ENCODE measurements at regions of chr3 and their contacts with region 1.

Region 1: DNA sequence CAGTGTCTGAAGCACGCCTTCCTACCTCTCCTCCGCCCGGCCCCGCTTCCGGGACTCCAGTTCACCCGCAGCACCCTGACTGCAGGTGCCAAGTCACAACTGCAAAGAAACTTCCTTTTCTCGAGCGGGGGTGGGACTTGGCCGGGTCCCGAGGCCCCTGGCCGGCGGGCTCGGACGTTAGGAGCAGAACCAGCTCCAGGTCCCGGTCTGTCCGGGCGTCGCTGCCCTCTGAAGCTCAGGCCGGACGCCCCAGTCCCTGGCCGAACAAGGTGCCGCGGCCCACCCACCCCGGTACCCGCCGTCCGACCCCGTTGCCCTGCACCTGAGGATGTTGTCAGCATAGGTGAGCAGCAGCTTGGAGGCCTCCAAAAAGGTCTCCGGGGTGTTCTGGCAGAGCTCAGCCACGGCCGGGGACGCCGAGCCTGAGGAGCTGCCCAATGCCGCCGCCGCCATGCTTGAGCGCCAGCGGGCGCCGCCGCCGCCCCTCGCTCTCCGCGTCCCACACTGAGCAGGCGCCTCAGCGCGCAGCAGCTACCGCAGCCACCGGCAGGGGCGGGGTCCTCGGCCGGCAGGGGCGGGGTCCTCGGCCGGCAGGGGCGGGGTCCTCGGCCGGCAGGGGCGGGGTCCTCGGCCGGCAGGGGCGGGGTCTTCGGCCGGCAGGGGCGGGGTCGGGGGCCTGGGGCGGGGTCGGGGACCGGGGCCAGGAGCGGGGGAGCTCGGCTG is at the start of gene NGLY1:
- DNase-seq: peak; percentile 75 to 91
- H3K4me3 ChIP-seq: peak within 1 kb of the TSS; percentile 95 to 97
- H3K27ac ChIP-seq: peak within 1 kb of the TSS; percentile 94 to 97
- H3K4me1 ChIP-seq: peaks cover 0 to 21% (median 11%) of the 10 kb centered on the region in 4 donors
- H3K27me3 ChIP-seq: no peaks in the 10 kb centered on the region
- CTCF ChIP-seq: peak; percentile 35 to 39

Region 2: DNA sequence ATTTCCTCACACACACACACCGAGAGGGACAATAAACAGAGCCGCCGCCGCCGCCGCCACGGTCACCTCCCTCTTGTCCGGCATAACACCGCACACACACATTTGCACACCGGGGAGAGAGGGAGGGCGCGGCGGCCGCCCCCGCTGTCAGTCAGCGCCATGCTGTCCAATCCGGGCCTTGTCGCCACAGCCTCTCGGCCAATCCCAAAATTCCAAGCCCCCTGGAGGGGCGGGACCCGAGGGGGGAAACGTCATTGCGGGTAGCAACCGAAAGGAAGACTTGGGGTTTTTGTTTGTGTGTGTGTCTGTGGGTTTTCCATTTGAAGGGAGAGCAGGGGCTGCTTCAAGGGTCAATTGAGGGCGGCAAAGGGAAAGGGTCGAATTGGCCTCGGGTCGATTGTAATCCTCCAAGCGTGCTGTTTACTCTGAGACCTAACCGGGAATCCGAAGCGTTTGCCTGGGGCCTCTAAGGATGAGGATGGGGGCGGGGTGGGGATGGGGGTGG is 118.2 kb before region 1 on chr3 and contains the start of gene TOP2B:
- intact Hi-C with region 1: loop called (anchors 5 kb)
- DNase-seq: peak; percentile 96 to 98
- H3K4me3 ChIP-seq: peak within 1 kb of the TSS; percentile 81 to 90
- H3K27ac ChIP-seq: peak within 1 kb of the TSS; percentile 87 to 98
- H3K4me1 ChIP-seq: peaks cover 0 to 34% (median 22%) of the 10 kb centered on the region in 4 donors
- H3K27me3 ChIP-seq: no peaks in the 10 kb centered on the region
- CTCF ChIP-seq: no peak

Region 3: GRCh38 chr3:26004172-26004571 is 221.1 kb after region 1 on chr3:
- intact Hi-C with region 1: no loop called
- DNase-seq: no peak
- H3K4me3 ChIP-seq: no peak overlapping the region
- H3K27ac ChIP-seq: no peak overlapping the region
- H3K4me1 ChIP-seq: no peaks in the 10 kb centered on the region
- H3K27me3 ChIP-seq: no peaks in the 10 kb centered on the region
- CTCF ChIP-seq: no peak

Measured in tibial artery (tissue), 4 donors.